GM12878 (cell line): ENCODE measurements at regions of chr3 and their contacts with region 1.

Region 1: GRCh38 chr3:141105828-141106628 is 54.9 kb downstream of the SPSB4 start:
- DNase-seq: peak; percentile 20
- ATAC-seq: peak; percentile 81
- H3K4me3 ChIP-seq: no peak overlapping the region
- H3K27ac ChIP-seq: no peak overlapping the region
- H3K4me1 ChIP-seq: no peaks in the 10 kb centered on the region
- H3K27me3 ChIP-seq: no peaks in the 10 kb centered on the region
- CTCF ChIP-seq: peak; percentile 72 to 81 (median 74)
- EP300 ChIP-seq: no peak
- POLR2A ChIP-seq: no peak
- RAD21 ChIP-seq: peak; percentile 73

Region 2: DNA sequence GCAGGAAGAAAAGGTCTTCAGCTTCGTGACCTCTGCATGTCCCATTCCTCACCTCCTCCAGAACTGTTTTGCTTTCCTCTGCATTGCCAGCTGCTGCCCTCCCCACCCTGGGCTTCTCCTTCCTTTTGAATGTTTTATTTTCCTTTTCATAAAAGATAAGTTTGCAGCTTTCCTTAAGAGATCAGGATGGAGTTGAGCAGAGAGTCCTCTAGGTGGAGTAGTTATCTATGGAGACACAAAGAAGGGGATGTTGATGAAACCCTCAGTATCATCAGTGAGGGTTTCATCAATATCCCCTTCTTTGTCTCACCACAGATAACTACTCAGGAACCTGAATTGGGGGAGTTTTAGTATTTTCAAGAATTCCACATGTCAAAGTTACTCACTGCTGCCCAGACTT is 183.4 kb before region 1 on chr3:
- CTCF ChIA-PET with region 1: interaction called, 5 read pairs
- POLR2A ChIA-PET with region 1: no interaction called
- RAD21 ChIA-PET with region 1: interaction called, 3 read pairs
- SMC1A ChIA-PET with region 1: no interaction called
- in situ Hi-C with region 1: no loop called
- intact Hi-C with region 1: loop called (anchors 10 kb)
- DNase-seq: no peak
- ATAC-seq: peak; percentile 77
- H3K4me3 ChIP-seq: no peak overlapping the region
- H3K27ac ChIP-seq: no peak overlapping the region
- H3K4me1 ChIP-seq: no peaks in the 10 kb centered on the region
- H3K27me3 ChIP-seq: no peaks in the 10 kb centered on the region
- CTCF ChIP-seq: peak; percentile 39 to 45 (median 42); a peak in 5 of 6 replicates
- EP300 ChIP-seq: no peak
- POLR2A ChIP-seq: no peak
- RAD21 ChIP-seq: peak; percentile 57

Region 3: GRCh38 chr3:141192345-141192744 is 86.3 kb after region 1 on chr3:
- CTCF ChIA-PET with region 1: interaction called, 4 read pairs
- POLR2A ChIA-PET with region 1: no interaction called
- RAD21 ChIA-PET with region 1: interaction called, 3 read pairs
- SMC1A ChIA-PET with region 1: no interaction called
- in situ Hi-C with region 1: no loop called
- intact Hi-C with region 1: loop called (anchors 5 kb)
- DNase-seq: peak; percentile 64
- ATAC-seq: peak; percentile 100
- H3K4me3 ChIP-seq: no peak overlapping the region
- H3K27ac ChIP-seq: no peak overlapping the region
- H3K4me1 ChIP-seq: no peaks in the 10 kb centered on the region
- H3K27me3 ChIP-seq: no peaks in the 10 kb centered on the region; a peak in 1 of 4 replicates
- CTCF ChIP-seq: peak; percentile 93 to 99 (median 94)
- EP300 ChIP-seq: no peak
- POLR2A ChIP-seq: no peak
- RAD21 ChIP-seq: peak; percentile 90

Region 4: GRCh38 chr3:141275026-141275910 is 169.2 kb after region 1 on chr3:
- CTCF ChIA-PET with region 1: no interaction called
- POLR2A ChIA-PET with region 1: no interaction called
- RAD21 ChIA-PET with region 1: no interaction called
- SMC1A ChIA-PET with region 1: no interaction called
- in situ Hi-C with region 1: no loop called
- intact Hi-C with region 1: no loop called
- DNase-seq: no peak
- ATAC-seq: peak; percentile 42; the same call in 2 of the 3 replicates
- H3K4me3 ChIP-seq: no peak overlapping the region
- H3K27ac ChIP-seq: no peak overlapping the region
- H3K4me1 ChIP-seq: peaks cover 7% of the 10 kb centered on the region
- H3K27me3 ChIP-seq: peaks cover 0 to 4% of the 10 kb centered on the region in 2 experiments; a peak in 1 of 4 replicates
- CTCF ChIP-seq: no peak
- EP300 ChIP-seq: no peak
- POLR2A ChIP-seq: no peak
- RAD21 ChIP-seq: no peak